Caco-2 (cell line): ENCODE measurements at regions of chr7 and their contacts with region 1.

Region 1: DNA sequence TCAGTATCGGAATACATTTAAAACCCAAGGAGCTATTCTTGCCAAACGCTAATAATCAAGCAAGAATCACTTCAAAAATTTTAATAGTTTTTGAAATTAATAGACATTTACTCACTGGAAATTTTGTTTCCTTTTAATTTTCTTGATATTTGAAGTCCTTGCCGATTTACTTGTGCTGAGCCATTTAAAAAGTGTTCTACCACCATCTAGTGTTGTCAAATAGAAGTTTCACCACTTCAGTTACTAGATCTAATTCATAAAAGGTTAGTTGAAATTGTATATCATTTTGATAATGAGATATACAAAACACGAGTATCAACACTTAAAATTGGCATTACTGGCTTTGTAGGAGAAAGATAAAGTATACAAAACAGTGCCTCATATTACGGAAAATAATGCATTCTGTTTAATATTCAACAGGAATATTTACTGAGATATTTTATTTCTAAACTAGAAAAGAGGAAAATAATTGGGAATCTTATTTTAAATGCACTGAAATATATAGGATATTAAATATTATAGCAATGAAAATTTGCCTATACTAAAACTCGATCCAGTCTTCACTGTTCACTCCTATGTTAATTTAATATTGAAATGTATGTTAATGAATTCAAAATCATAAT is 664.8 kb upstream of the SEMA3D start:
- DNase-seq: peak in 1 of 2 experiments; percentile 17
- H3K4me3 ChIP-seq: no peak overlapping the region
- H3K4me3 Mint-ChIP-seq: no peak overlapping the region
- H3K27ac Mint-ChIP-seq: no peak overlapping the region
- H3K4me1 ChIP-seq: no peaks in the 10 kb centered on the region
- H3K4me1 Mint-ChIP-seq: no peaks in the 10 kb centered on the region
- H3K27me3 ChIP-seq: no peaks in the 10 kb centered on the region
- H3K27me3 Mint-ChIP-seq: peaks cover 8% of the 10 kb centered on the region
- CTCF ChIP-seq: peak; percentile 32 to 36

Region 2: DNA sequence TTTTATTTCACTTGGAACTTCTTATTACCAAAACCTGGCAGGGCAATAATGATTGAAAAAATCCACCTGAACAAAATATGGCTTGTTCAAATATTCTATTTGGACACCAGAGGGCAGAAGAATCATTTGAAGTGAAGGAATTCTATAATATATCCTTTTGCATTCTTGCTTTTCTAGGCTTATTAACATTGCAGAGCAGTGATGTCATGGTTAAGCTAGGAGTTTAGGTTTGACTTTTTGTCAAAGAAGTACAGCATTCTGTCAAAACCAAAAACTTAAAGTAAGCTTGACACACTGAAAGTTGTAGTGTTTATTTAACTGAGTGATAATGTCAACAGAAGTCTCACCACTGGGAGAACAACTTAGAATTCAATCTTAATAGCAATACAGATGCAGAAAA is 820.8 kb before region 1 on chr7:
- CTCF ChIA-PET with region 1: no interaction called
- POLR2A ChIA-PET with region 1: no interaction called
- intact Hi-C with region 1: loop called (anchors 1 kb)
- DNase-seq: peak in 1 of 2 experiments; percentile 26
- H3K4me3 ChIP-seq: no peak overlapping the region
- H3K4me3 Mint-ChIP-seq: no peak overlapping the region
- H3K27ac Mint-ChIP-seq: no peak overlapping the region
- H3K4me1 ChIP-seq: peaks cover 7% of the 10 kb centered on the region; the same call in 1 of the 2 replicates
- H3K4me1 Mint-ChIP-seq: no peaks in the 10 kb centered on the region
- H3K27me3 ChIP-seq: no peaks in the 10 kb centered on the region
- H3K27me3 Mint-ChIP-seq: peaks cover 4% of the 10 kb centered on the region
- CTCF ChIP-seq: peak; percentile 29 to 65